Caco-2 (cell line): ENCODE measurements at regions of chr9 and their contacts with region 1.

Region 1: GRCh38 chr9:123349691-123350480 is 6.1 kb upstream of the CRB2 start:
- DNase-seq: peak; percentile 71 to 81
- H3K4me3 ChIP-seq: no peak overlapping the region
- H3K4me3 Mint-ChIP-seq: no peak overlapping the region
- H3K27ac Mint-ChIP-seq: no peak overlapping the region
- H3K4me1 ChIP-seq: 0 out of 2 replicates have a peak, but pooled peaks cover 4% of the 10 kb centered on the region
- H3K4me1 Mint-ChIP-seq: peaks cover under 1% of the 10 kb centered on the region
- H3K27me3 ChIP-seq: no peaks in the 10 kb centered on the region
- H3K27me3 Mint-ChIP-seq: peaks cover 12% of the 10 kb centered on the region
- CTCF ChIP-seq: peak; percentile 93 to 96

Region 2: DNA sequence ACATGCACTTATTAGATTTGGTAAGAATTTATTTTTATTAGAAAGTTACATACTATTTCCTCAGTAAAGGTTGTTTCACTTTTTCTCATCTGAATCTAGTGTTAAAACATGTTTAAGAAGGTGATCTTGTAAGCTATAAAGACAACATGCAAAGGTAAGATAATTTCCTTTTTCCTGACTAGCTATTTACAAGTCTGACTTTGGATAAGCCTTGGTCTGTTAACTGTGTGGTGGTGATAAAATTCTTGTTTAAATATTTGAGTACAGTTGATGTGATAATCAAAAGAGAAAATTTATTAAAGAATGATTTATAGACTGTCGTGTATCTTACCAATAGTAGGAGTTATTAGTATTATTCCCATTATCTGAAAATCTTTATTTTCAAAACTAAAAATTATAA is 353.3 kb before region 1 on chr9:
- CTCF ChIA-PET with region 1: interaction called, 12 read pairs
- POLR2A ChIA-PET with region 1: no interaction called
- intact Hi-C with region 1: loop called (anchors 5 kb)
- DNase-seq: no peak
- H3K4me3 ChIP-seq: no peak overlapping the region
- H3K4me3 Mint-ChIP-seq: no peak overlapping the region
- H3K27ac Mint-ChIP-seq: no peak overlapping the region
- H3K4me1 ChIP-seq: peaks cover 5% of the 10 kb centered on the region; the same call in 1 of the 2 replicates
- H3K4me1 Mint-ChIP-seq: peaks cover 11% of the 10 kb centered on the region
- H3K27me3 ChIP-seq: no peaks in the 10 kb centered on the region
- H3K27me3 Mint-ChIP-seq: no peaks in the 10 kb centered on the region
- CTCF ChIP-seq: no peak

Region 3: GRCh38 chr9:123102375-123103110 is 247.3 kb before region 1 on chr9:
- CTCF ChIA-PET with region 1: interaction called, 30 read pairs
- POLR2A ChIA-PET with region 1: no interaction called
- intact Hi-C with region 1: loop called (anchors 1 kb)
- DNase-seq: peak; percentile 30 to 35
- H3K4me3 ChIP-seq: no peak overlapping the region
- H3K4me3 Mint-ChIP-seq: peak overlapping the region; percentile 4
- H3K27ac Mint-ChIP-seq: peak overlapping the region; percentile 59
- H3K4me1 ChIP-seq: peaks cover 25% of the 10 kb centered on the region
- H3K4me1 Mint-ChIP-seq: peaks cover 12% of the 10 kb centered on the region
- H3K27me3 ChIP-seq: no peaks in the 10 kb centered on the region
- H3K27me3 Mint-ChIP-seq: no peaks in the 10 kb centered on the region
- CTCF ChIP-seq: peak; percentile 25 to 47

Region 4: DNA sequence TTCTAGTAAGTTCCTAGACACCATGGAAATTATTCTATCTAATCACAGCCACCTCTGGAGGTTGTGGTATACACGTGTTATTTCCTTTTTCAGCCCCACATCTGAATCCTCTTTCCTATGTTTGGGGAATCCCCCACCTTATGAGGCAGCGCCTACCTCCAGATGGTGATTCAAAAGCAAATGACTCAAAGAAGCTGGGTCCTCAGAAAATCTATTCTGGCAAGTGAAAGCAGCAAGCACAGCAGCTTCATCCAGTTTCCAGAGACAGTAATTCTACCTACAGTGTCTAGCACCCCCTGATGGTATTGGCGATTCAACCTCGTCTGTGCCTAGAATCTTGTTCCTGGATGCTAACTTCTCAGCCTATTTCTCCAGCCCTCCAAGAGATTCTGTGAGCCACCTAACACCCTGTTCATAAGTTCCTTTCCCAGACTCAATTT is 124.5 kb before region 1 on chr9:
- CTCF ChIA-PET with region 1: no interaction called
- POLR2A ChIA-PET with region 1: no interaction called
- intact Hi-C with region 1: loop called (anchors 2 kb)
- DNase-seq: peak; percentile 43 to 46
- H3K4me3 ChIP-seq: no peak overlapping the region
- H3K4me3 Mint-ChIP-seq: no peak overlapping the region
- H3K27ac Mint-ChIP-seq: no peak overlapping the region
- H3K4me1 ChIP-seq: peaks cover 6% of the 10 kb centered on the region; the same call in 1 of the 2 replicates
- H3K4me1 Mint-ChIP-seq: peaks cover 13% of the 10 kb centered on the region
- H3K27me3 ChIP-seq: no peaks in the 10 kb centered on the region
- H3K27me3 Mint-ChIP-seq: no peaks in the 10 kb centered on the region
- CTCF ChIP-seq: peak; percentile 33 to 58

Region 5: GRCh38 chr9:123255718-123256117 is 94.2 kb before region 1 on chr9:
- CTCF ChIA-PET with region 1: no interaction called
- POLR2A ChIA-PET with region 1: no interaction called
- intact Hi-C with region 1: no loop called
- DNase-seq: no peak
- H3K4me3 ChIP-seq: no peak overlapping the region
- H3K4me3 Mint-ChIP-seq: no peak overlapping the region
- H3K27ac Mint-ChIP-seq: no peak overlapping the region
- H3K4me1 ChIP-seq: peaks cover 7% of the 10 kb centered on the region
- H3K4me1 Mint-ChIP-seq: peaks cover 25% of the 10 kb centered on the region
- H3K27me3 ChIP-seq: no peaks in the 10 kb centered on the region
- H3K27me3 Mint-ChIP-seq: no peaks in the 10 kb centered on the region
- CTCF ChIP-seq: no peak

Region 6: DNA sequence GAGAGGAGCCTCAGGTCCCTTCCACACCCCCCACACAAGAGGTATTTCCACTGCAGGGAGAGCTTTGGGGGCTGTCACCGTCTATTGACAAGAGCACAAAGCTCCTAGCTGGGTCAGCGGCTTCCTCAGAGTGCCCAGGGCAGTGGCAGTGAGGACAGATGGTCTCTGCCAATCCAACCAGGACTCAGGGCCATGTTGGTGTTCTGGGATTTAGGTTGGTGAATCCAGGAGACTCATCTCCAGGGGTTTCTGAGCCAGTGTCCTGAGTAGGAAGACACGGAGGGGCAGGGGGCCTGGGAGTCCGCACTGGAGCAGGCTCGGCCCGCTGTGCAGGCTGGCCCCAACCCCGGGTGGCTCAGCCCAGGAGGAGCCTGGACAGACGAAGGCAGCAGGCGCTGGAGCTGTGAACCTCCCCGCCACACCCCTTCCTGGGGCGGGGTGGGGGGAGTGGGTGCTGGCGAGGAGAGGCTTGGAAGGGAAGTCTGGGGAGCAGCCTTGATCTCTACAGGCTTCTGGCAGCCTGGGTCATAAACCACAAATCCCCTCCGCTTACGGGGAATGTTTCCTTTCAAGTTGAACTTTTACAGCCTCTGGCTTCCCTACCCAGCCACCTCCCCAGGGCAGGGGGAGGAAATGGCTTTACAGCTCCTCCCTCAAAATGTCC is 25.7 kb after region 1 on chr9:
- CTCF ChIA-PET with region 1: interaction called, 5 read pairs
- POLR2A ChIA-PET with region 1: no interaction called
- intact Hi-C with region 1: loop called (anchors 2 kb)
- DNase-seq: peak; percentile 82 to 86
- H3K4me3 ChIP-seq: no peak overlapping the region
- H3K4me3 Mint-ChIP-seq: peak overlapping the region; percentile 17
- H3K27ac Mint-ChIP-seq: peak overlapping the region; percentile 79
- H3K4me1 ChIP-seq: peaks cover 32% of the 10 kb centered on the region
- H3K4me1 Mint-ChIP-seq: peaks cover 32% of the 10 kb centered on the region
- H3K27me3 ChIP-seq: no peaks in the 10 kb centered on the region
- H3K27me3 Mint-ChIP-seq: no peaks in the 10 kb centered on the region
- CTCF ChIP-seq: no peak

Region 7: DNA sequence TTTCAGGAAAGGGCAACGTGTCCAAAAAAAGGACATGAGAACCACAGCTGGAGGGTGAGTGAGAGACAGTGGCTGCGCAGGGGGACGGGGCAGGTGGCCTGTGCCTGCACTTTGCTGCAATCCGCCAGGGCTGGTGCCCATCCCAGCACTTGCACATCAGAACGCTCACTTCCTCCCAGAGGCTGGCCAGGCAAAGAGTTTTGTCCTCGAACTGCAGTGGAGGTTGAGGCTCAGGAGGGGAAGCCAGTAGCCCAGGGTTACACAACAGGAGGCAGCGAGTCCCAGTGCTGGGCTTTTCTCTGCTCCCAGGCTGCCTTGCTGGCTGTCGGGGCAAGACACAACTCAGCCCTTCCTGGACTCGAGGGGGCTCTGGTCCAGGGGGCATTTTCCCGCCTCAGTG is 39.2 kb after region 1 on chr9:
- CTCF ChIA-PET with region 1: interaction called, 21 read pairs
- POLR2A ChIA-PET with region 1: no interaction called
- intact Hi-C with region 1: loop called (anchors 1 kb)
- DNase-seq: no peak
- H3K4me3 ChIP-seq: no peak overlapping the region
- H3K4me3 Mint-ChIP-seq: no peak overlapping the region
- H3K27ac Mint-ChIP-seq: no peak overlapping the region
- H3K4me1 ChIP-seq: no peaks in the 10 kb centered on the region
- H3K4me1 Mint-ChIP-seq: no peaks in the 10 kb centered on the region
- H3K27me3 ChIP-seq: no peaks in the 10 kb centered on the region
- H3K27me3 Mint-ChIP-seq: no peaks in the 10 kb centered on the region
- CTCF ChIP-seq: no peak

Region 8: GRCh38 chr9:123406691-123407216 is 56.9 kb after region 1 on chr9:
- CTCF ChIA-PET with region 1: no interaction called
- POLR2A ChIA-PET with region 1: no interaction called
- intact Hi-C with region 1: no loop called
- DNase-seq: no peak
- H3K4me3 ChIP-seq: no peak overlapping the region
- H3K4me3 Mint-ChIP-seq: no peak overlapping the region
- H3K27ac Mint-ChIP-seq: no peak overlapping the region
- H3K4me1 ChIP-seq: no peaks in the 10 kb centered on the region
- H3K4me1 Mint-ChIP-seq: no peaks in the 10 kb centered on the region
- H3K27me3 ChIP-seq: no peaks in the 10 kb centered on the region
- H3K27me3 Mint-ChIP-seq: no peaks in the 10 kb centered on the region
- CTCF ChIP-seq: no peak